Heart left ventricle (tissue), 16 donors: ENCODE measurements at regions of chr14 and their contacts with region 1.

Region 1: DNA sequence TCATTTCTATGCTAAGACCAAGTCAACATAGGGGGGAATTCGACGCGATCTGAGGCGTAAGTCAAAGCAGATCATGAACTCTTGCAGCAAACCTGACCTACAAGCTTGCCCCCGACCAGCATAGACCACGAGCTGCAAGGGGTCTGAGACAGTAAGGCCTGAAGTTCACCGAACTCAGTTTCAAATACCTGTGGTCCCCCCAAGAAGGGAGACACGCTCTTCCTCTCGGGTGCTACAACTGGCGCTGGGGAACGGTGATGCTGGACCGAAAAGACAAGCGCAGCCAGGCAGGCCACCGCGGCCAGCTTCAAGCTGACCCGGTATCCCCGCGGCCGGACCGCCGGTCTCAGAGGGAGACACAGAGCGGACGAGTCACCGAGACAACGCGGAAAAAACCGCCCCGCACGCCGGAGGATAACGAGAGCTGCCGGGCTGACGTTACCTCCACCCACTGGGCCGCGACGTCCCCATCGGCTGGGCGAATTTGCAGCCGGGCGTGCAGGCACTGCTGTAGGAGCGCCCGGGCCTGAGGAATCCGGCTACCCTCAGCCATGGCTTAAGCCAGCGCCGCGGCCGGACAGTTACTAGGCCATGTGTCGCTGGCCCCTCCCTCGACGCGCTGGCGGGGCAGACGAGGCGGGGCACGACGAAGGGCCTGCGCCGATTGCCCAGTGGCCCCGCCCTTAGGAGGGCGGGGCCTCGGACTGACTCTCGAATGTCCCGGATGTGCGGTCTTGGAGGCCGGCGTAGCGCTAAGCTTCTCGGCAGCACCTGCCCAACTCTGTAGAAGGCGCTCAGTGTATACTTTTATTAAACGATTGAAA is at the start of gene DTD2:
- DNase-seq: peak; percentile 95 to 97 (median 96)
- ATAC-seq: peak; percentile 100
- H3K4me3 ChIP-seq: peak within 1 kb of the TSS; percentile 50 to 86 (median 70)
- H3K27ac ChIP-seq: peak within 1 kb of the TSS; percentile 70 to 97 (median 89)
- H3K4me1 ChIP-seq: peaks cover 0 to 41% (median 11%) of the 10 kb centered on the region in 12 donors
- H3K27me3 ChIP-seq: no peaks in the 10 kb centered on the region
- CTCF ChIP-seq: peak in 3 of 12 donors; percentile 8 to 23 (median 8)
- POLR2A ChIP-seq: peak in 1 of 2 donors; percentile 93
- total RNA-seq, gene DTD2: 5.4 to 12.2 (median 8.2) TPM

Region 2: GRCh38 chr14:31400031-31400638 is 56.9 kb before region 1 on chr14:
- intact Hi-C with region 1: loop called in 1 of 10 experiments (anchors 10 kb)
- DNase-seq: no peak
- ATAC-seq: no peak
- H3K4me3 ChIP-seq: no peak overlapping the region
- H3K27ac ChIP-seq: no peak overlapping the region
- H3K4me1 ChIP-seq: peaks cover 0 to 22% (median 2%) of the 10 kb centered on the region in 12 donors
- H3K27me3 ChIP-seq: no peaks in the 10 kb centered on the region
- CTCF ChIP-seq: no peak
- POLR2A ChIP-seq: no peak

Region 3: DNA sequence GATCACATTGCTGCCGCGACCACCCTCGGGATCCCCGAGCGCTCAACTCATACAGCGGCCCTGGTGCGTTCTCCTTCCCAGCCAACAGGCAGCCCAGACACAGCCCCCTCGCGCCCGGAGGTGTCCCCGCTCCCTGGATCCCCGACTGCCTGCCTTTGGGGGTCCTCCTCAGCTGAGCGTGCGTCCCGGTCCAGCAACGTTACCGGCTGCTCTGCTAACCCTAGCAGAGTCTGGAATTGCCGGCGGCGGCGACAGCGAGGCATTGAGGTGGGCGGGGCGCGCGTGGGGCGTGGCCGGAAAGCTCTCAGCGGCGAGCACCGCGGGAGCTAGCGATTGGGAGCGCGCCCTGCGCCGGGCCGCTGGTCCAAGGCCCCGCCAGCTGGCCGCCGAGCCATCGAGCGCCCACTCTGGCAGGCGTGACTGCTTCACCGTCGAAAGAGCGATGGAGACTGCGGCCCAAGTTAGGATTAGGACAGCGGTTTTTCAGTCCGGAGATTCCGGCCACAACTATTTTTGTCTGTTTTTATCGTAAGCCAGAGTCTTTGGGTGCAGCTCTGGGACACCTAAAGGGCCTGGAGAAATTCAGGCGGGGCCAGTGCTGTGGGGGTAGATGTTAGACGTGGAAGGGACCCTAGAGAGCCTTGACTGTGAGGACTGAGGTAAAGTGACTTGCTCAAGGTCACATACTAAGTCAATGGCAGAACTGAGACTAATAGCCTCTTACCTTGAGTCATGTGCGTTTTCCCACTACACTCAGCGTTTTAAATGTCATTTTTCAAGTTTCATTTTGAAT is 36.5 kb before region 1 on chr14 and contains the start of gene HEATR5A:
- intact Hi-C with region 1: loop called in 5 of 10 experiments (anchors 2 to 5 kb)
- DNase-seq: peak; percentile 96 to 98 (median 97)
- ATAC-seq: peak; percentile 95 to 99 (median 98)
- H3K4me3 ChIP-seq: peak within 1 kb of the TSS; percentile 73 to 98 (median 94)
- H3K27ac ChIP-seq: peak within 1 kb of the TSS; percentile 70 to 96 (median 90)
- H3K4me1 ChIP-seq: peaks cover 0 to 28% (median 19%) of the 10 kb centered on the region in 12 donors
- H3K27me3 ChIP-seq: no peaks in the 10 kb centered on the region
- CTCF ChIP-seq: peak in 7 of 12 donors; percentile 24 to 55 (median 36)
- POLR2A ChIP-seq: peak; percentile 96 to 100
- total RNA-seq, gene HEATR5A: 24.9 to 57.6 (median 45.5) TPM